GM23248 (cell line): ENCODE measurements at regions of chr1 and their contacts with region 1.

Region 1: DNA sequence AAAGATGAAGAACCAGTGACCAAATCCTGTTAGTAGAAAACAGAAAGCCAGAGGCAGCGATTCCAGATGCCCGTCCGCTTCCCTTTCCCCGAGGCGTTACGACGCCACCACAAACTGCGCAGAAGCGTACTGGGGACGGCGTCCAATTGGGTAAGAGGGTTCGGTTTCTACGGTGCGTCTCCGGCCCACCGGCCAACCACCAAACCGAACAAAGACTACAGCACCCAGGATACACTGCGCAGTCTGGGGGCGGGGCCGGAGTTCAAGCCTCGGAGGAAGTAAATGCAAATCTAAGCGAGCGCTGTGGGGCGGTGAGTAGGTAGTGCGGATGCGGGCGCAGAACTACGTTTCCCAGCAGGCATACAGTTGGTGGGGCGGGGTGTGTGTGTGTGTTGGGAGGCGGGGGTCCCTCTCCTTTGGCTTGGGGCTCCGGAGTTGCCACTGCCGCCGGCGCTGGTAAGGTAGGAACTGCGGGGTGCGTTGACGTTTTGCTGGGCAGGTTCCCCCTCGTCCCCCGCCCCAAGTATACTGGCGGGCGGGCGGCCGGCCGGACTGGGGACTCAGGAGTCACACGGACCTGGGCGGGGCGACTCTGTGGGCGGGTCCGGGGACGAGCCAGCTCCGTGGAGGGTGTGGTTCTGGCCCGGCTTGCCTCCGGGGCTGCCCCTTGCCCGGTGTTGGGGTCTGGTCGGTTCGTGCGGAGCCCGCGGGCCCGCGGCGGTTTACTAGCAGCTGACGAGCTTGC is at the starts of genes SWT1 and TRMT1L:
- DNase-seq: peak; percentile 100
- H3K4me3 ChIP-seq: peak within 1 kb of the TSS; percentile 89
- H3K27ac ChIP-seq: peak within 1 kb of the TSS; percentile 96
- H3K4me1 ChIP-seq: peaks cover 22% of the 10 kb centered on the region
- H3K27me3 ChIP-seq: no peaks in the 10 kb centered on the region
- total RNA-seq, gene SWT1: 1.0 and 2.8 TPM in 2 replicates
- total RNA-seq, gene TRMT1L: 5.1 and 13.2 TPM in 2 replicates

Region 2: GRCh38 chr1:184992271-184992670 is 164.8 kb before region 1 on chr1:
- in situ Hi-C with region 1: loop called (anchors 10 kb)
- DNase-seq: no peak
- H3K4me3 ChIP-seq: no peak overlapping the region
- H3K27ac ChIP-seq: no peak overlapping the region
- H3K4me1 ChIP-seq: no peaks in the 10 kb centered on the region
- H3K27me3 ChIP-seq: no peaks in the 10 kb centered on the region

Region 3: DNA sequence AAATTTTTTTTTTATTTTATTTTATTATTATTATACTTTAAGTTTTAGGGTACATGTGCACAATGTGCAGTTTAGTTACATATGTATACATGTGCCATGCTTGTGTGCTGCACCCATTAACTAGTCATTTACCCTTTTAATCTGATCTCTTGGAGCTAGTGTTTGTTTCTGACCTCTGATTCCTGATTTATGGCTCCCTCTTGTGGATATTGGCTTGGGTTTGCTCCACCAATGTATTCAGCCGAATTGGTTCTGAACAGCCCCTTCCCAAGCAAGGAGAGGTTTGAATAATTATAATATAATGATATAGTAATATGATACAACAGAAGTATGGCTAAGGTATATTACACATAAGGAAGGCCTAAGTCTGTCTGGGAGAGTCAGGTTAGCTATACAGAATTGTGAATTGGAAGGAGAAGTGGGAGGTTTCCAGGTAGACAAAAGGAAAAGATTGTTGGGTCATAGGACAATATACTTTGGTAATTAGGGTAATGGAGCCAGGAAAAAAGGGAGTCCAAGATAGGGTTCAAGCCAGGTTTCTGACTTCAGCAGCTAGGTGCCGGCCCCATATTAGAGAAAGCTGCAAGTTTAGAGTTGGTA is 524.1 kb after region 1 on chr1:
- in situ Hi-C with region 1: no loop called
- DNase-seq: peak; percentile 56
- H3K4me3 ChIP-seq: no peak overlapping the region
- H3K27ac ChIP-seq: no peak overlapping the region
- H3K4me1 ChIP-seq: no peaks in the 10 kb centered on the region
- H3K27me3 ChIP-seq: no peaks in the 10 kb centered on the region